Activated T-helper 1 cell treated with anti-CD3 and anti-CD28 coated beads, Interleukin-12 subunit alpha, Interleukin-12 subunit beta, Interleukin-2, Interleukin-4 antibody, amounts not matched to agents 30 ng/mL and 10 ng/mL and 1 ng/mL, durations not matched to agents 14 hours and 24 hours and 36 hours (primary cell): ENCODE measurements at regions of chr15 and their contacts with region 1.

Region 1: DNA sequence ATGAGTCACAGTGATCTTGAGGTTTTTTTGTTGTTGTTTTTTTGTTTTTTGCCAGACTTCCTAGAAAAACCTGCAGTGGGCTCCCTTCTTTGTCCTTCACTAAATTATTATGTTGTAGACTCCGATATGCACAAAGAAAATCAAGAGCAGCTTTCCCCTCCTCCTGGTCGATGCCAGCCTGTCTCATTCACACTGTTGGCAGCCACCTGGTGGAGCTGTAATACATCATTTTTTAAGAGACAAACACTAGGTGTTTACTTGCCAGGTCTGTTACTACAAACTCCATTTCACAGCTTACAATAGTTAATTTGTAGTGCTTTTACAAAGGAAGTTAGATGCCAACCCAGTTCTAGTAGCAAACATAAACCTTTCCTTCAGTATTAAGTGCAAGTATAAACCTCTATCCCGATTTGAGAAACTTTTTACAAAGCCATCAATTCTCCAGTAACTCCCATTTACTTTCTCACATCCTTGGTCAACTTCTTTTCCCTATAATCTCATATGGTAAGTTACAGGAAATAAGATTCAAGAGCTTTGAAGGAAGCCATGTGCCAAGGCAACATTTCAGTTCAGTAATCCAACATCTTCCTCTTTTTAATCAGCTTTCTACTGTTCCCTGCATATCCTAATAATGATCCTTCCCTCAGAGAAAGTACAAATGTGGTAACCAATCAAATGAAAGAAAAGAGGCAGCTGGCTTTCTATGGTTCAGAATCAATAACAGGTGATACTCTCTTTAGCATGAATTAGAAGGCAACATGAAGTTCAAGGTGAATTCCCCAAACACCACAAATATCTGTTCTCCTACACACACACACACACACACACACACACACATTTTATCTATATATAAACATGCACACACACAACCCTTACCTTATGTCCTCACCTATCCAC is 14.0 kb downstream of the AAGAB start:
- DNase-seq: no peak
- H3K4me3 Mint-ChIP-seq: peak overlapping the region; percentile 47
- H3K27ac Mint-ChIP-seq: peak overlapping the region; percentile 87
- H3K4me1 Mint-ChIP-seq: peaks cover 49% of the 10 kb centered on the region
- H3K27me3 Mint-ChIP-seq: no peaks in the 10 kb centered on the region

Region 2: GRCh38 chr15:66101715-66102395 is 1138.6 kb before region 1 on chr15:
- intact Hi-C with region 1: no loop called
- DNase-seq: no peak
- H3K4me3 Mint-ChIP-seq: no peak overlapping the region
- H3K27ac Mint-ChIP-seq: no peak overlapping the region
- H3K4me1 Mint-ChIP-seq: no peaks in the 10 kb centered on the region
- H3K27me3 Mint-ChIP-seq: peaks cover 14% of the 10 kb centered on the region

Region 3: DNA sequence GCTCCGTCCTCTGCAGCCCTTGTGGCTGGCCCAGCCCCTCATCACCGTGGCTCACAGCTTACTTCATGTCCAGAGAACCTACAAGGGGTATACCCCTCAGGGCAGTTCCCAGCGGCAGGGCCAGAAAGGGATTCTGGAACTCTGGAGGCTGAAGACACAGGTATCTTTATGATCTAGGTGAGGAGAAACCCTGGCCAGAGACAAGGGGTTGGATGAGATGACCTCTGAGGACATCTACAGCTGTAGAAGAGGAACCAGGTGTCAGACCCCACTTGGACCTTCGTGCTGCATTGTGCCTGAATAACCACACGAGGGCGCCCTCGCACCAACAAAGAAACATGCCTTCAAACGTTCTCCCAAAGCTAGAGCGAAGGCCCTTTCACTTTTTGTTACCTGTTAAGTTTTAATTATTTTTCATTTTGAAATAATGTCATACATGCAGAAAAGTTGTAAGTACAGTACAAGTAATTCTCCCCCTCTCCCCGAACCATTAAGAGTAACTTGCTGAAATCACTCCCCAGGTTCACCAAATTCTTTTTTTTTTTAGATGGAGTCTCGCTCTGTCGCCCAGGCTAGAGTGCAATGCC is 293.8 kb before region 1 on chr15:
- intact Hi-C with region 1: loop called (anchors 1 kb)
- DNase-seq: peak; percentile 64
- H3K4me3 Mint-ChIP-seq: no peak overlapping the region
- H3K27ac Mint-ChIP-seq: no peak overlapping the region
- H3K4me1 Mint-ChIP-seq: peaks cover 24% of the 10 kb centered on the region
- H3K27me3 Mint-ChIP-seq: peaks cover 5% of the 10 kb centered on the region

Region 4: DNA sequence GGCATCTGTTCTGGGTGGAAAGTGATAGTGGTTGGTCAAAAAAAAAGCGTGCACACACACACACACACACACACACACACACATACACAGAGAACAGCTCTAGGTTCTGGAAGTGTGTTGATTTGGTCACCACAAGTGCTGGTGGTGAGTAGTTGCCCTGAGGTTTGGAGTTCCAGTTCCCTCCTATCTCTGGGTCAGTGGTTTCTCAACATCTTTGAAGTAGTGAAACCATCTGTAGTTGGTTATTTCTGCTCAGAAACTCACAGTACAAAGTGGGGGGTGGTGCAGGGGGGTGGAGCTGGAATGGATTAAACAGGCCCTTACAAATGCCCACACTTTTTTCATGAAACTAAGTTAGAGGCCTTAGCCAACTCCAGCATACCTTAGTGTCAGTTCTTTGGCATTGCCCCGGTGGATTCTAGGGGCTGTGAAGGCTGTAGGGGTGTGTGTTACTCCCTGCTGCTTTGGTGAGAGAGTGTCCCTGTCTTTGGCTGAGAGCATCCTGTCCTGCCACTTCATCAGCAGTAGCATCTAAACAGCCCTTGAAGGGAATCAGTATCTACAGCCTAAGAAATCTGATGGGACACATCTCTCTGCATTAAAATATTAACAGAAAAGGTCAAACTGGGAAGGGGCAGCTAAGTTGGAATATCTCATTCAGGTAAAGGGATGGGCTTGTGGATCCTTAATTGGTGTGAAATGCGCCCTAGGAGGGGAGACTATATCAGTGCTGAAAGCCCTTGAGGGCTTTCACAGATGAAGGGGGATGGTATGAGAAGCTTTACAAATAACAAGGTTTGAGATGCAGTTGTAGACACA is 154.5 kb before region 1 on chr15:
- intact Hi-C with region 1: loop called (anchors 1 kb)
- DNase-seq: peak; percentile 40
- H3K4me3 Mint-ChIP-seq: peak overlapping the region; percentile 72
- H3K27ac Mint-ChIP-seq: peak overlapping the region; percentile 98
- H3K4me1 Mint-ChIP-seq: peaks cover 100% of the 10 kb centered on the region
- H3K27me3 Mint-ChIP-seq: no peaks in the 10 kb centered on the region

Region 5: DNA sequence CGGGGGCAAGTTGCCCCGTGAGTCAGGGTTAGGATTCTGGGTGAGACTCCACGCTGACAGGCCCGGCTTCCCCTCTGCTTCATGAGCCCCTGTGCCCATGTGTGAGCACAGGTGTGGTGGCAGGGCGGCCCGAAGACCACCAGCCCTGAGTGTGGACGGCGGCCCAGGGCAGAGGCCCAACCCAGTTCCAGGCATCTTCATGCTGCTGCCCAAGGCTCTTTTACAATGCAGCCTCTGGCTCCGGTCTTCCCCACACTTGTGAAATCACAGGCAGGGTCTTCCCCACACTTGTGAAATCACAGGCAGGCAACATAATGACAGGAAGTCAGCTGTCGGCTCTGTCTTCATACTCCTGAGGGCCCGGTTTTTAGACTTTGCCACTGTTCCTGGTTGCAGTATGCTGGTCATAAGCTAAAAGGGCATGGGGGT is 64.8 kb before region 1 on chr15:
- intact Hi-C with region 1: loop called (anchors 2 kb)
- DNase-seq: no peak
- H3K4me3 Mint-ChIP-seq: peak overlapping the region; percentile 31
- H3K27ac Mint-ChIP-seq: peak overlapping the region; percentile 83
- H3K4me1 Mint-ChIP-seq: peaks cover 82% of the 10 kb centered on the region
- H3K27me3 Mint-ChIP-seq: no peaks in the 10 kb centered on the region

Region 6: DNA sequence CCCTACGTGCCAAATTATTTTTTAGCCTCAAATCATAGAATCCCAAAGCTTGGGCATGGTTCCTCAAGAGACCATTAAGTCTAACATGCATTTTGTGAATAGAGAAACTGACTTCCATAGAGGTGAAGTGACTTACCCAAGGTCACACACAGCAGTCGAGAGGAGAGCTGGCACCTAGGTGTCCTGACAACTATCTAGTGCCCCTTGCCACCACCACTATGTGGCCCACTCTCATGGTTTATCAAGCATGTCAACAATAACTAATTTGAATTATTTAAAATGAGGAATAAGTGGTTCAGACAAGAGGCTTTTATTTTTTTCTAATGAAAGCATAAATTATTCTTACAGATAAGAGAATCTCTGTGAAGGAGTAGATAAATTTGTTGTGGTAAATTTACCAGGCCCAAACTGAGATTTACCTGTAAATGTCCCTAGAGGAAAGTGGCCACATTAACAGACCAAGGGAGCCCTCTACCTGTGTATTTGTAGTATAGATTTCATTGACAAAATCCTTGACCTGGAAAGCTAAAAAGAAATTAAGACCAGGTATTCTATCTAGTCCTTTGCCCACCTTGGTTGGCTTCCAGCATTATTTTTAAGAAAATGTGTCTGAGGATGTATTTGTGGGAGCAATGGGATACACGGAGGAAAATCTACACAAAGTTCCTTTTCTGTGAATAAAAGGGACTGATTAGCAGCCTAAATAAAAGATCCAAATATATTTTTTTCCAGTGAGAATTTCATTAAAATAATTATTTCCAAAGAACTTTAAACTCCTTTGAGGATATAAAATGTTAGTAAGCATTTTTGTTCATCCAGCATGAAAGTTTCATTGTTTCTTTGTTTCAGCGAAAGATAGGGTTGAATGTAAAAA is 63.2 kb after region 1 on chr15:
- intact Hi-C with region 1: loop called (anchors 1 kb)
- DNase-seq: no peak
- H3K4me3 Mint-ChIP-seq: no peak overlapping the region
- H3K27ac Mint-ChIP-seq: no peak overlapping the region
- H3K4me1 Mint-ChIP-seq: peaks cover 5% of the 10 kb centered on the region
- H3K27me3 Mint-ChIP-seq: peaks cover 5% of the 10 kb centered on the region

Region 7: DNA sequence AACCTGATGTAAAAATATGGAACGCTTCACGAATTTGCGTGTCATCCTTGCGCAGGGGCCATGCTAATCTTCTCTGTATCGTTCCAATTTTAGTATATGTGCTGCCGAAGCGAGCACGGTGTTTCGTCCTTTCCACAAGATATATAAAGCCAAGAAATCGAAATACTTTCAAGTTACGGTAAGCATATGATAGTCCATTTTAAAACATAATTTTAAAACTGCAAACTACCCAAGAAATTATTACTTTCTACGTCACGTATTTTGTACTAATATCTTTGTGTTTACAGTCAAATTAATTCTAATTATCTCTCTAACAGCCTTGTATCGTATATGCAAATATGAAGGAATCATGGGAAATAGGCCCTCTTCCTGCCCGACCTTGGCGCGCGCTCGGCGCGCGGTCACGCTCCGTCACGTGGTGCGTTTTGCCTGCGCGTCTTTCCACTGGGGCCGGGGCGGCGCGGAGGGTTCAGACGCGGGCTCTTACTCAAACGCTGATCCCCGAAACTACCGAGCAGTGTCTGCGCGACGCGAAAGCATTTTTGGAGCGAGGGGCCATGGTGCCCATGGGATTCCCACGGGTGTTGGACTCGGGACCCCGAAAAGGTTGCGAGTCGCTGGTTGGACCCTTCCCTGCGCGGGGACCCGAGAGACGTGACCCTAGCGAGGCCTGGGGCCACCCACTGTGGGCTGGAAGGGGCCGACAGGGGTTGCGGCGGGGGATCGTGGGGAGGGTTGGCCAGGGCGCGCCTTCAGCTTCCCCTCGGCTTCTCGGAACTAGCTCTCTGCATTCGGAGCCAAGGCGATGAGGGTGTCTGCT is 599.7 kb after region 1 on chr15 and contains the start of gene RNU6-1:
- intact Hi-C with region 1: loop called (anchors 2 kb)
- DNase-seq: peak; percentile 95
- H3K4me3 Mint-ChIP-seq: peak within 1 kb of the TSS; percentile 87
- H3K27ac Mint-ChIP-seq: peak within 1 kb of the TSS; percentile 88
- H3K4me1 Mint-ChIP-seq: peaks cover 26% of the 10 kb centered on the region
- H3K27me3 Mint-ChIP-seq: peaks cover 29% of the 10 kb centered on the region
- total RNA-seq, gene RNU6-1: not detected in 2 replicates